ENCODE measurements at regions of chr5 and their contacts with region 1.

Region 1: DNA sequence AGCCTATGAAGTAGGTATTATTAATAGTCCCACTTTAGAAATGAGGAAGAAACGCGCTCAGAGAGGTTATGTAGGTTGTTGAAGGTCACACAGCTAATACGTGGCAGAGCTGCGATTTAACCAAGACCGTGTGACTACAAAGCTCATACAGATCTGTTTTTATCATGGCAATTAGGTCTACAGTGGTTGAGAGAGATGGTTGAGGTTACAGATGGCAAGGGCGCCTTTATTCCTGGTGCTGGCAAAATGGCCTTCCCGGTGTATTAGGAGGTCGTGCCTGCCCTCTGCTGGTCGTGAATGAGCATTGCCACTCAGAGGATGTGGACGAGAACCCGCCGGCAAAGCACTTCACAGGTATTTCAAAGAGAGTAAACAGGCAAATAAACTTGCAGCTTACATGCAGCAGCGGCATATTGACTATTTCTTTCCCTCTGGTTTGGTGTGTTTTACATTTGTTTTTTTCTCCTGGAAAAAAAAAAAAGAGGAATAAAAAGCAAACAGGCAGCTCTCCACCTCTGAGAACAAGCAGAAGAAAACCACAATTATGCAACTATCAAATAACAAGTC is 65.3 kb upstream of the EGFLAM start:
- H3K4me3 ChIP-seq: no peak overlapping the region
- H3K27ac ChIP-seq: no peak overlapping the region
- H3K4me1 ChIP-seq: 0 out of 2 replicates have a peak, but pooled peaks cover 7% of the 10 kb centered on the region
- CTCF ChIP-seq: peak; percentile 87

Region 2: GRCh38 chr5:38208782-38209378 is 15.8 kb after region 1 on chr5:
- CTCF ChIA-PET with region 1: interaction called, 10 read pairs
- POLR2A ChIA-PET with region 1: no interaction called
- H3K4me3 ChIP-seq: no peak overlapping the region
- H3K27ac ChIP-seq: no peak overlapping the region
- H3K4me1 ChIP-seq: no peaks in the 10 kb centered on the region
- CTCF ChIP-seq: peak; percentile 67

Region 3: DNA sequence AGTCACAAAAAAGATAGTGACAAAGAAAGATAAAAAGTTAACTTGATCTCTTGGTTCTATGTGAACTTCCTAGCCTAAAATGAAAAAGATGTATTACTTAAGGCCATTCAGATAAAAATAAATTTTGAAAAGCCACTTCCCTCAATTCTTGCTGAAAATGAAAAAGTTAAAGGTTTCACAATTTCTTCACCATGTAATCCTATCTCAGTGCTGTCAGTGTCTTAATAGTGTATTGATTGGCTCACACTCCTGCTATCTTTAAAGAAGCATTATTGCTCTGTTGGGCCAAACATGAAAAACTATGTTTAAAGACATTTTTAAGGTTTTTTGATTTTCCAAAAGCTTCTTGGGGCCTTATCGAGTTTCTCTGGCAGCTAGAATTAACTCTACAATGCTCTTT is 47.1 kb after region 1 on chr5:
- CTCF ChIA-PET with region 1: no interaction called
- POLR2A ChIA-PET with region 1: no interaction called
- H3K4me3 ChIP-seq: no peak overlapping the region
- H3K27ac ChIP-seq: no peak overlapping the region
- H3K4me1 ChIP-seq: peaks cover 2% of the 10 kb centered on the region; the same call in 1 of the 2 replicates
- CTCF ChIP-seq: no peak